Left colon (tissue), 2 donors: ENCODE measurements at regions of chr2 and their contacts with region 1.

Region 1: DNA sequence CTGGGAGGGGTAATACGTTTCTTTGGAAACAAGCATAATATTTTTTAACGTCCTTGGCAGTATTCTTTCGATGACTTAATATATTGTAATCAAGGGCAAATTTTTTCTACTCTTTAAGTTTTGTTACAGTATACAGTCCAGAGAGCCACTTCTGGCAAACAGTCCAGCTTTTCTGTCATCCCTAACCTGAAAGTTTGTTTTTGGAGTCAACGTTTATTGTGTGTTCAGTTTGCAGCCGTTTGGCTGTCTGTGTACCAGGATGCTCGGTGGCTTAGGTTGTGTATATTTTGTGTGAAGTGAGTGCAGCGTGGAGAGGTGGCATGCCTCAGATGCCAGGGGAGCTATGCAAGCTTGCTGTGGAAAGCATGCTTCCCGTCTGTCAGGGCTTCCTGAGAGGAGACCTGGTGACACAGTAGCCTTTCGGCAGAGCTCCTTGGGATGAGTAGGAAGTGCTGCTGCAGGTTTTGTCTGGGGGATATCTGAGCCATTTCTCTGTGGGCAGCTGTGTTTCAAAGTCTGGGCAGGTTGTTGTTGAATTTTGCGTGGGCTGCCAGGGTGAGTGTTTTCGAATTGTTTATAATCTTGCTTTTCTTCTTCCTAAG is 14.7 kb downstream of the MAP3K20 start:
- DNase-seq: no peak
- ATAC-seq: no peak

Region 2: GRCh38 chr2:172888714-172889669 is 201.4 kb before region 1 on chr2:
- intact Hi-C with region 1: no loop called
- DNase-seq: no peak
- ATAC-seq: no peak

Region 3: GRCh38 chr2:173191601-173192000 is 101.2 kb after region 1 on chr2:
- intact Hi-C with region 1: loop called in 1 of 2 experiments (anchors 10 kb)
- DNase-seq: no peak
- ATAC-seq: no peak